Panc1 (cell line): ENCODE measurements at regions of chr3 and their contacts with region 1.

Region 1: DNA sequence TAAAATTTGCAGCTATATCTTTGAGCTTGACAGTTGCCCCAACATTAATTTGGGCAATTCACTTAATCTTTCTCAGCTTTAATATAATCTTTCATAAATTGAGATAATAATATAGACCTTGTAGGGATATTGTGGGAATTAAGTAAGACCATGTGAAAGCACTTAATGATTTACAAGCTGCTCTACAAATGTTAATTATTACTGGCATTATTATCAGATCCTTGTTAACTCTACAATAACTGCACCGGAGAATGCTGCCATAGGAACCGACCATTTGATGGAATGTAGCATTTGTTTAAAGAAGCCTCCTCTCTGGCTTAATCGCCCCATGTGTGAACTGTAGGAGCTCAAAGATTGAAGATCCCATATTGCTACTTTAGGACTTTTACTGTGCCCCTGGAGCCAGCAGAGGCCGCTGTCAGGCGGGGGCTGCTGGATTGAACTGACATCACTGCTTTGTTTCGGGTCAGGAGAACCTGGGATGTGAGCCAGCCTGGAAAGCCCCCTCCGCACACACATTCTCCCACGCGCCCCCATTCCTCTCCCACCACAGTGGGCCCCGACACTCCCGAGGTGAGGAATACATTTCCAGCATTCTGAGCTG is 154.2 kb upstream of the TNIK start:
- DNase-seq: no peak
- ATAC-seq: 0 out of 2 replicates have a peak, but pooled peaks have one; percentile 56
- H3K4me3 ChIP-seq: no peak overlapping the region
- H3K27ac ChIP-seq: no peak overlapping the region
- H3K4me1 ChIP-seq: no peaks in the 10 kb centered on the region
- H3K27me3 ChIP-seq: no peaks in the 10 kb centered on the region
- CTCF ChIP-seq: peak; percentile 73

Region 2: GRCh38 chr3:171640520-171641412 is 26.3 kb after region 1 on chr3:
- CTCF ChIA-PET with region 1: no interaction called
- POLR2A ChIA-PET with region 1: interaction called, 10 read pairs
- in situ Hi-C with region 1: no loop called
- intact Hi-C with region 1: no loop called
- DNase-seq: no peak
- ATAC-seq: peak; percentile 82; the same call in 1 of the 2 replicates
- H3K4me3 ChIP-seq: no peak overlapping the region
- H3K27ac ChIP-seq: no peak overlapping the region
- H3K4me1 ChIP-seq: peaks cover 5% of the 10 kb centered on the region; the same call in 1 of the 2 replicates
- H3K27me3 ChIP-seq: no peaks in the 10 kb centered on the region
- CTCF ChIP-seq: no peak; the same call in none of the 2 replicates